Adrenal gland (tissue), 19 donors: ENCODE measurements at regions of chr9 and their contacts with region 1.

Region 1: GRCh38 chr9:89542401-89543021 is 44.6 kb upstream of the SEMA4D start:
- DNase-seq: no peak
- H3K4me3 ChIP-seq: no peak overlapping the region
- H3K27ac ChIP-seq: no peak overlapping the region
- H3K4me1 ChIP-seq: no peaks in the 10 kb centered on the region
- H3K27me3 ChIP-seq: no peaks in the 10 kb centered on the region
- CTCF ChIP-seq: no peak
- POLR2A ChIP-seq: no peak

Region 2: GRCh38 chr9:89323390-89323789 is 219.1 kb before region 1 on chr9:
- intact Hi-C with region 1: loop called (anchors 5 to 10 kb)
- DNase-seq: no peak
- H3K4me3 ChIP-seq: no peak overlapping the region
- H3K27ac ChIP-seq: no peak overlapping the region
- H3K4me1 ChIP-seq: peaks cover 12 to 40% of the 10 kb centered on the region in 2 donors
- H3K27me3 ChIP-seq: no peaks in the 10 kb centered on the region
- CTCF ChIP-seq: no peak
- POLR2A ChIP-seq: no peak

Region 3: DNA sequence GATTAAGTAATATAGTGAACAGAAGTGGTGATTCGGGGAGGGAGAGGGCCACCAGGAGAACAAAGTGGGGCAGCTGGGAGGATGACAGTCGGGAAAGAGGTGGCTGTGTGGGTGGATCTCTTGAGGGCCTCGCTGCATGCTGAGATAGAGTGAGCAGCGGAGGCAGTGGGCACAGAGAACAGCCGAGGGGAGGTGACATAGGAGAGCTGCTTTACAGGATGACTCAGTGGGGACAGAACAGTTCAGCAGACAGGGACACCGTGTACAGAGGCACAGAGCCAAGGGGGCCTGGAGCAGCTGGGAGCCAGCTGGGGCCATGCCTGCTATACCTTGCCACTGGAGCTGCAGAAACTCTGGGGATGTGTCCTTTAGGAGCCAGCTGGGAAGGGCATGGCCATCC is 336.2 kb after region 1 on chr9:
- intact Hi-C with region 1: no loop called
- DNase-seq: peak; percentile 80 to 98 (median 94)
- H3K4me3 ChIP-seq: no peak overlapping the region
- H3K27ac ChIP-seq: peak overlapping the region in 4 of 5 donors; percentile 46 to 74 (median 63)
- H3K4me1 ChIP-seq: peaks cover 13 to 29% of the 10 kb centered on the region in 2 donors
- H3K27me3 ChIP-seq: no peaks in the 10 kb centered on the region
- CTCF ChIP-seq: no peak
- POLR2A ChIP-seq: peak in 1 of 2 donors; percentile 66